ENCODE measurements at regions of chr1 and their contacts with region 1.

Region 1: GRCh38 chr1:227234998-227235405 is 83.3 kb downstream of the CDC42BPA start:
- DNase-seq: no peak
- H3K4me3 ChIP-seq: no peak overlapping the region
- H3K27ac ChIP-seq: no peak overlapping the region
- H3K4me1 ChIP-seq: peaks cover 0 to 7% (median 0%) of the 10 kb centered on the region in 4 donors
- H3K27me3 ChIP-seq: no peaks in the 10 kb centered on the region
- CTCF ChIP-seq: peak; percentile 21 to 53 (median 34)
- EP300 ChIP-seq: no peak
- POLR2A ChIP-seq: no peak

Region 2: DNA sequence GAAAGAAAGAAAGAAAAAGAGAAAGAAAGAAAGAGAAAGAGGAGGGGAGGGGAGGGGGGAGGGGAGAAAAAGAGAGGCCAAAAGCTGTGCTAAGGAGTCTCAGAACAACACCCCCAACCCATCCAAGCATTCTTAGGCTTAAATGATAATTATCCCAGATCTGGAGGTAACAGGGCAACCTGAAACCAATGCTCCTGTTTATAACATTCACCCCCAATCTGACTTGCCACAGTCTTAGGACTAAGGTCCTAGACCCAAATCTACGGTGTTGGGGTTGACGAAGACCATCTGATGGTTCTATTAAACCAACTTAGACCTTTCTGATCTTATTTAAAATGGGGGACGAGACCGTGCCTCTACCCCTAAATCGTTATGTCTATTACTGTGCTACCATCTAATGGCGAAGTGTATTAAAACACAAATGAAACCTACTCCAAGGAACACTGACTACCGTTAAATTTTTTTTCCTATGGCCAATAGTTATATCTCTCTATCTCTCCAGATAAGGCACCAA is 202.6 kb after region 1 on chr1:
- in situ Hi-C with region 1: loop called (anchors 25 kb)
- intact Hi-C with region 1: loop called (anchors 10 kb)
- DNase-seq: no peak
- H3K4me3 ChIP-seq: peak overlapping the region in 2 of 4 donors; percentile 19 to 43
- H3K27ac ChIP-seq: no peak overlapping the region
- H3K4me1 ChIP-seq: peaks cover 0 to 5% (median 2%) of the 10 kb centered on the region in 4 donors
- H3K27me3 ChIP-seq: no peaks in the 10 kb centered on the region
- CTCF ChIP-seq: peak; percentile 31 to 60 (median 41)
- EP300 ChIP-seq: no peak
- POLR2A ChIP-seq: no peak